ENCODE measurements at regions of chr5 and their contacts with region 1.

Region 1: GRCh38 chr5:91419571-91420537 is 36.7 kb upstream of the ARRDC3 start:
- DNase-seq: peak; percentile 40
- H3K4me3 Mint-ChIP-seq: no peak overlapping the region
- H3K27ac Mint-ChIP-seq: no peak overlapping the region
- H3K4me1 Mint-ChIP-seq: peaks cover 4% of the 10 kb centered on the region
- H3K27me3 Mint-ChIP-seq: peaks cover under 1% of the 10 kb centered on the region

Region 2: GRCh38 chr5:90802474-90803317 is 617.2 kb before region 1 on chr5:
- intact Hi-C with region 1: loop called (anchors 1 kb)
- DNase-seq: no peak
- H3K4me3 Mint-ChIP-seq: no peak overlapping the region
- H3K27ac Mint-ChIP-seq: no peak overlapping the region
- H3K4me1 Mint-ChIP-seq: no peaks in the 10 kb centered on the region
- H3K27me3 Mint-ChIP-seq: peaks cover 3% of the 10 kb centered on the region

Region 3: DNA sequence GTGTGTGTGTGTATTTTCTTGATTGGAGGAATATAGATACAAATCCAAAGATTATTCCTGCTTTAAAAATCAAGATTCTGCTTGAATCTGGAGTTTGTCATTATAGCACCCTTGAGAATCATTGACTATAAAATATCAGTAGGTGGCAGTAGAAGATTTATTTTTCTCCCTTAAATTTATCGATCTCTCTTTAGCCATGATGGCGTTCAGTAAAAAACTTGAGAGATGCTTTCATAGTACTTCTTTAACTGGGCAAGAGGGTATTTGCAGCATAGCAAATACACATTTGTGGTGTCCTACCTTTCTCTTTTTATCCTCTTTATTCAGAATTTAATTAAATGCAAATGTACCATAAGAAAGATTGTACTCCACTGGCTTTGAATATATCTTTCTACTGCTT is 553.5 kb before region 1 on chr5:
- intact Hi-C with region 1: loop called (anchors 1 kb)
- DNase-seq: no peak
- H3K4me3 Mint-ChIP-seq: no peak overlapping the region
- H3K27ac Mint-ChIP-seq: no peak overlapping the region
- H3K4me1 Mint-ChIP-seq: no peaks in the 10 kb centered on the region
- H3K27me3 Mint-ChIP-seq: peaks cover 5% of the 10 kb centered on the region

Region 4: GRCh38 chr5:90932052-90932699 is 487.7 kb before region 1 on chr5:
- intact Hi-C with region 1: loop called (anchors 1 kb)
- DNase-seq: no peak
- H3K4me3 Mint-ChIP-seq: no peak overlapping the region
- H3K27ac Mint-ChIP-seq: no peak overlapping the region
- H3K4me1 Mint-ChIP-seq: peaks cover 5% of the 10 kb centered on the region
- H3K27me3 Mint-ChIP-seq: peaks cover 6% of the 10 kb centered on the region

Region 5: DNA sequence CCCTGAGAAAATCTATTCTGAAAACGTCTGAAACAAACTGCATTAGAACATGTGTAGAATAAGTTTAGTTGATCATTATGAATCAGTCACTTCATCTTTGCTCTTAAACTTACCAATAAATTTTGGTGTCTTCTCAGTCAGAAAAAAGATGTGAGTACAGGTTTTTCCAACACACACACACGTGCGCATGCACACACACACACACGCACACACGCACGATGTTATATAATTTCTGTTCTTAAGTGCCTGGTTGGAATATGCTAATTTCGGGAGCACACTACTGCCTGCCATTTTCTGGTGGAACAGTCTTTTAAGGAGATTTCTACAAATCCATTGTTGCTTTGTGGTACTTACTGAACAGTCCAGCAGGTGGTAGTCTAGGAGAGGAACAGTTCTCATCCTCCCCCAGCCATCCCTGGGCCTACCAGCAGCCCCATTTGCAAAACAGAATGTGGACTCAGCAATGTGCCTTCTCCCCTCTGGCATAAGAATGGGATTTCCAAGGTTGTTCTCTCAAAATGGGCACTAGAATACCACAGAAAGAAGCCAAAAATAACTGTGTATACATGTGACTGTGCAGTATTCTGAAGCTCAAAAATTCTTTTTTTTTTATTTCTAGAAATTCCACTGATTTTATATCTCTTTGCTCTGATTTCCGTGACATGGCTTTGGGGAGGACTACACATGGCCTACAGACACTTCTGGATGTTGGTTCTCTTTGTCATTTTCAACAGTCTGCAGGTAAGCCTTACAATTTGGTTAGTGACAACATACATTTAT is 318.1 kb before region 1 on chr5:
- intact Hi-C with region 1: loop called (anchors 1 kb)
- DNase-seq: peak; percentile 25
- H3K4me3 Mint-ChIP-seq: no peak overlapping the region
- H3K27ac Mint-ChIP-seq: no peak overlapping the region
- H3K4me1 Mint-ChIP-seq: no peaks in the 10 kb centered on the region
- H3K27me3 Mint-ChIP-seq: peaks cover 12% of the 10 kb centered on the region

Region 6: DNA sequence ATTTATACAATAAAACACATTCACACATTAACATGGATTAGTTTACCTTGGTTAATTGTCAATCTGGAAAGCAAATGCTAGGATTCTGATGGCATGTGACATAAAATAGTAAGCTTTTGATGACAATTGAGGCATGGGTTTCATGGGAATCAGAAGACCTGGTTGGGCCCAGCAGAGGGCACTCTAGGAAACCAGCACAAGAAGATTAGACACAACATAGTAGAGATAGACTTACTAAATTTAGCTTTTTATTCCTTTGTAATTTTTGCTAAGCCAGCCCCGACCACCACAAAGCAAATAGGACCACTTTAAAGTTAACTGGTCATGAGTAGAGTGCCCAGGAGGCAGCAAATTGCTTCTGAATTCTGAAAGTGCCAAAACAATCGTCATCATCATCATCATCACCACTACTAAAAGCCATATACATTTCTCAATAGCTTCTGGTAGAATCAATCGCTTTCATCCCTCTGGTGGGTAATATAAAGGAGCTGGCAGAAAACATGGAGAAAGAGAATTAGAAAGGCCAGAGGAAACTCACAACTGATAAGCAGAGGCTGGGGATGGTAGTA is 200.0 kb before region 1 on chr5:
- intact Hi-C with region 1: loop called (anchors 2 kb)
- DNase-seq: peak; percentile 2
- H3K4me3 Mint-ChIP-seq: no peak overlapping the region
- H3K27ac Mint-ChIP-seq: no peak overlapping the region
- H3K4me1 Mint-ChIP-seq: no peaks in the 10 kb centered on the region
- H3K27me3 Mint-ChIP-seq: peaks cover 11% of the 10 kb centered on the region

Region 7: DNA sequence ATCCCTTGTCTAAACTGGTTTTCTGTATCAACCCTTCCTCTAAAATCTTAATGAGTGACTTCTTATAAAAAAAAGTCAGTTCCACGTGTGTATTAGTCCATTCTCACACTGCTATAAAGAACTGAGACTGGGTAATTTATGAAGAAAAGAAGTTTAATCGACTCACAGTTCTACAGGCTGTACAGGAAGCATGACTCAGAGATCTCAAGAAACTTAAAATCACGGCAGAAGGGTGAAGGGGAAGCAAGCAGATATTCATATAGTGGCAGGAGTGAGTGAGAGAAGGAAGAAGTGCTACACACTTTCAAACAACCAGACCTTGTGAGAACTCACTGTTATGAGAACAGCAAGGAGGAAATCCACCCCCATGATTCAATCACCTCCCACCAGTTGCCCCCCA is 271.1 kb after region 1 on chr5:
- intact Hi-C with region 1: no loop called
- DNase-seq: no peak
- H3K4me3 Mint-ChIP-seq: no peak overlapping the region
- H3K27ac Mint-ChIP-seq: no peak overlapping the region
- H3K4me1 Mint-ChIP-seq: no peaks in the 10 kb centered on the region
- H3K27me3 Mint-ChIP-seq: no peaks in the 10 kb centered on the region

Measured in activated T-helper 1 cell treated with anti-CD3 and anti-CD28 coated beads, Interleukin-12 subunit alpha, Interleukin-12 subunit beta, Interleukin-2, Interleukin-4 antibody, amounts not matched to agents 30 ng/mL and 10 ng/mL and 1 ng/mL, durations not matched to agents 14 hours and 24 hours and 36 hours (primary cell).